ENCODE measurements at regions of chr10 and their contacts with region 1.

Region 1: DNA sequence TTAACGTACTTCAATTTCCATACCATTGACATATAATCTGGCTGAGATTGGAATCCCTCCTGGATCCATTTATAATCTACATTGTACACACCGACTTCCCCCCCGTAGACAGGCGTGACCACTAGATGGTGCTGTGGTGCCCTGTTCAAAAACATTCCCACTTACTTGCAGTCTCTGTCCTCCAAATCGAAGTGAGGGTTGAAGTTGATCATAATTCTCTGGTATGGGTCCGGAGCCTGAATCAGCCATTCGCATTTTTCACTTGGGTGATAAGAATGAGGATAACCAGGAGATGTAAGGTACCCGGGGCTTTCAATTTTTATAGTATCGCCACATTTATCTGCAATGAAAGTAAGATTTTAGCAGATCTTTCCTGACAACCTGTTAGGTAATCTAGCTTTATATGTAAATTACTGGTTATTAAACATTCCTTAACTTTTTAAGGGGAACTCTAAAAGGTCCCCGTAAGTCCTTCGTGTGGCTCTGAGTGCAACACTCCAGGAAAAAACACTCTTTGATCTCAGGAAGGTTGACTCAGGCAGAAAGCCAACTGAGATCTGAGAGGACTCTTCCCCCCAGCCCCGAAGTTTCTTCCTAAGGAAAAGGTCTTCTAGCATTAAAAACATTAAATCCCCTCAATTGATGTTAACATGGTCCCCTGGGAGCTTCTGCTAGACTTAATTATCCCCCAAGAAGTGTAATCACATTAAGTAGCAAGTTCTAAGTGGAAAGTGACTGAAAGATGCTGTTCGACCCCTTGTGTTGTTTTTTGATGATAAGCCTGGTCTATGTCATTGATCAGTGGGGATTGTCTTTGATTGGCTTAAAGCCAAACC is 3.7 kb downstream of the NRP1 start:
- DNase-seq: peak; percentile 73
- H3K4me3 ChIP-seq: peak overlapping the region; percentile 91 to 95 (median 91)
- H3K27ac ChIP-seq: peak overlapping the region; percentile 55
- H3K4me1 ChIP-seq: peaks cover 40% of the 10 kb centered on the region
- H3K27me3 ChIP-seq: no peaks in the 10 kb centered on the region
- CTCF ChIP-seq: peak; percentile 88 to 91

Region 2: GRCh38 chr10:33509231-33509831 is 178.6 kb after region 1 on chr10:
- CTCF ChIA-PET with region 1: interaction called, 4 read pairs
- dilution Hi-C with region 1: no loop called
- in situ Hi-C with region 1: loop called in 1 of 2 experiments (anchors 5 kb)
- intact Hi-C with region 1: loop called (anchors 5 kb)
- DNase-seq: peak; percentile 91
- H3K4me3 ChIP-seq: no peak overlapping the region
- H3K27ac ChIP-seq: peak overlapping the region; percentile 77
- H3K4me1 ChIP-seq: peaks cover 17% of the 10 kb centered on the region
- H3K27me3 ChIP-seq: no peaks in the 10 kb centered on the region
- CTCF ChIP-seq: no peak

Region 3: GRCh38 chr10:33570495-33570894 is 239.7 kb after region 1 on chr10:
- CTCF ChIA-PET with region 1: no interaction called
- dilution Hi-C with region 1: no loop called
- in situ Hi-C with region 1: no loop called
- intact Hi-C with region 1: loop called (anchors 2 kb)
- DNase-seq: no peak
- H3K4me3 ChIP-seq: no peak overlapping the region
- H3K27ac ChIP-seq: no peak overlapping the region
- H3K4me1 ChIP-seq: peaks cover 8% of the 10 kb centered on the region
- H3K27me3 ChIP-seq: no peaks in the 10 kb centered on the region
- CTCF ChIP-seq: no peak

Region 4: GRCh38 chr10:33772370-33773252 is 441.9 kb after region 1 on chr10:
- CTCF ChIA-PET with region 1: no interaction called
- dilution Hi-C with region 1: no loop called
- in situ Hi-C with region 1: no loop called
- intact Hi-C with region 1: loop called (anchors 10 kb)
- DNase-seq: no peak
- H3K4me3 ChIP-seq: no peak overlapping the region
- H3K27ac ChIP-seq: no peak overlapping the region
- H3K4me1 ChIP-seq: no peaks in the 10 kb centered on the region
- H3K27me3 ChIP-seq: no peaks in the 10 kb centered on the region
- CTCF ChIP-seq: no peak

Region 5: DNA sequence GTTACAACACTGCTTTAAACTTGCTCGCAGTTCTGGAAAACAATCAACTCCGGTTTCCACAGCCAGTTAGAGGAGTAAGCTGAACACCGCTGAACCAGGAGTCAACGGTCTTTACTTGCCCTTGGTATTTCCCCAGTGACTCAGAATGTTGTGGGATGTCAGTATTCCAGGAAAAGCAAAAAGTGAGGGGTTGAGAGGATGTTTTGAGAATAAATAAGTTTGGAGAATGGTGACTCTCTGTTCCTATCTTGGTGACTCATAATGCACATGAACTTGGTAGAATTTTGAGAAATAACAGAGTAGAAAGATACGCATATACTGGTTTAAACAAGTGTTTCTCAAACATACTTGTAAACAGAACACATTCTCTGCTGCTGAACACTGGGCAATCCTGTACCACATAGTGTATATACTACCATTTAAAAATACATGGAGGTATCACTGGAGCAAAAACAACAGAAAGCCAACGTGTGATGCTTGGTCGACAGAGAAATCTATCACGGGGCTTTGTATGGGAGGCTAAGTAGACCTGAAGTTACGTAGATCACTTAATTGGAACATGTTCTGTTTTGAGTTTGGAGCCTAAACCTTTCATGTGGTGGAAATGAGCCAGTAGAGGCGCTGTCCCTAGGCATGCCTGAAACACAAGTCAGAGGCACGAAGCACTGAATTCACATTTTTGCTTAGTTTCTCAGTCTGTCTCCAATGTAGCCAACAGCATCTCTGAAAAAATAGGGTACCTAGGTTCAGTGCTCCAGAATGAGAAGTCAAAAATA is 950.0 kb after region 1 on chr10:
- CTCF ChIA-PET with region 1: no interaction called
- dilution Hi-C with region 1: no loop called
- in situ Hi-C with region 1: no loop called
- intact Hi-C with region 1: loop called (anchors 10 kb)
- DNase-seq: peak; percentile 99
- H3K4me3 ChIP-seq: peak overlapping the region in 1 of 3 experiments; percentile 35
- H3K27ac ChIP-seq: peak overlapping the region; percentile 76
- H3K4me1 ChIP-seq: peaks cover 33% of the 10 kb centered on the region
- H3K27me3 ChIP-seq: no peaks in the 10 kb centered on the region
- CTCF ChIP-seq: peak; percentile 19 to 23

Measured in mammary epithelial cell (primary cell).